Activated CD4-positive, alpha-beta T cell treated with anti-CD3 and anti-CD28 coated beads for 36 hours (primary cell): ENCODE measurements at regions of chr4 and their contacts with region 1.

Region 1: GRCh38 chr4:173370477-173371291 is at the start of gene SAP30:
- DNase-seq: peak; percentile 99
- ATAC-seq: peak; percentile 88
- H3K4me3 Mint-ChIP-seq: peak within 1 kb of the TSS; percentile 93
- H3K27ac Mint-ChIP-seq: peak within 1 kb of the TSS; percentile 100
- H3K4me1 Mint-ChIP-seq: peaks cover 31% of the 10 kb centered on the region
- H3K27me3 Mint-ChIP-seq: peaks cover 8% of the 10 kb centered on the region
- total RNA-seq, gene SAP30: 22.0 to 29.3 TPM

Region 2: GRCh38 chr4:173346074-173346473 is 24.6 kb before region 1 on chr4:
- CTCF ChIA-PET with region 1: interaction called, 4 read pairs
- POLR2A ChIA-PET with region 1: interaction called, 3 read pairs
- intact Hi-C with region 1: loop called in 1 of 2 experiments (anchors 2 kb)
- DNase-seq: no peak
- ATAC-seq: no peak
- H3K4me3 Mint-ChIP-seq: no peak overlapping the region
- H3K27ac Mint-ChIP-seq: no peak overlapping the region
- H3K4me1 Mint-ChIP-seq: no peaks in the 10 kb centered on the region
- H3K27me3 Mint-ChIP-seq: no peaks in the 10 kb centered on the region

Region 3: DNA sequence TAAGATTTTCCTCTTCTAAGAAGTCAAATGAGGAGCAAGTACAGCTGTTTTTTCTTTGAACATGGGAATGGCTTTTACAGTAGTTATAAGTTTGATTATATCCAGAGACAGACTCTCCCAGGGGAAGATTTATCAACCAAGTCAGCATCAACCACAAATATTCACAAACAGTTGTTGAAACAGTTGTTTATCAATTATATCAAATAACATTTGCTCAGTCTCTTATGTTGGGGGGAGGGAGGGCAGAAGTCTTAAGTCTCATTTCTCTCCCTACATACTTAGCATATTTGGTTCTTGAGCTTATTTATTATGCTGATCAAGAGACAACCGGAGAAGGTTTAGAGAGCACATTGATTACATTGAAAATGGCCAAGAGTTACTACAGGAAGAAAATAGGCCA is 802.7 kb after region 1 on chr4:
- CTCF ChIA-PET with region 1: no interaction called
- POLR2A ChIA-PET with region 1: no interaction called
- intact Hi-C with region 1: no loop called
- DNase-seq: no peak
- ATAC-seq: no peak
- H3K4me3 Mint-ChIP-seq: no peak overlapping the region
- H3K27ac Mint-ChIP-seq: no peak overlapping the region
- H3K4me1 Mint-ChIP-seq: no peaks in the 10 kb centered on the region
- H3K27me3 Mint-ChIP-seq: peaks cover 17% of the 10 kb centered on the region

Region 4: GRCh38 chr4:174282836-174283506 is 912.3 kb after region 1 on chr4:
- CTCF ChIA-PET with region 1: no interaction called
- POLR2A ChIA-PET with region 1: interaction called, 3 read pairs
- intact Hi-C with region 1: loop called (anchors 1 to 2 kb)
- DNase-seq: peak; percentile 84
- ATAC-seq: peak; percentile 97
- H3K4me3 Mint-ChIP-seq: peak overlapping the region; percentile 98
- H3K27ac Mint-ChIP-seq: peak overlapping the region; percentile 100
- H3K4me1 Mint-ChIP-seq: peaks cover 64% of the 10 kb centered on the region
- H3K27me3 Mint-ChIP-seq: no peaks in the 10 kb centered on the region